ENCODE measurements at regions of chr15 and their contacts with region 1.

Region 1: DNA sequence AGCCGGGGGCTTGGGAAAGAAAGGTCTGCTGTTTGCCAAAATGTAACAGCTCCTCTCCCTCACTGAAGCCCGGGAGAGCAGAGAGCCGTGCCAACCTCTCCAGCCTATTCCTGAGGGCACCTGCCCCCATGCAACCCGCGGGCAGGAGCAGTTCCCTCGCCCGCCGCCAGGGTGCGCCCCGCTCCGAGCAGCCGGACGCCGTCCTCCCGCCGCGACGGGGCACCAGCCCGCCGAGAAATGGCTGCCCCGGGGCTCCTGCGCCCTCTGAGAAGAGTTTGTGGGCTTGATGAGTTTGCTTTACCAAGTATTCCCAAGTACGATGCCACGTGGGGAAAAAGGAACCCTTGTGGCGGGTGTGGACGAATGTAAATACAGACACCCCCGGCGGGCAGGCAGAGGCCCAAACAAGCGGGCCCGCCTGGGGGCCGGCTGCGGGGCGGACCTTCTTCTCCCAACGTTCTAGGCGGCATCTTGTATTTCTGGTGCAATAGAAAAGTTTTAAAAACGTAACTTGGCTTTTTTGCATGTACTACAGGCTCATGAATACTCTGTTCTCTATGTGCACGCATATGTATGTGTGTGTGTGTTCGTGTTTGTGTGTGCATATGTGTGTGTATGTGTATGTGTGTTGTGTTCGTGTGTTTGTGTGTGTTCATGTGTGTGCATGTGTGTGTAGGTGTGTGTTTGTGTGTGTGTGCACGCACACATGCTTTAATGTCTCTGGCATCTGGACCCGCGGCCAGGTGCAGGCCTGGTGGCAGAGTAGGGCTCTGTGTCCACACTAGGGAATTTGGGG is 162.9 kb downstream of the CHSY1 start:
- DNase-seq: peak; percentile 76
- H3K4me3 Mint-ChIP-seq: no peak overlapping the region
- H3K27ac Mint-ChIP-seq: no peak overlapping the region
- H3K4me1 Mint-ChIP-seq: peaks cover 8% of the 10 kb centered on the region
- H3K27me3 Mint-ChIP-seq: peaks cover 1% of the 10 kb centered on the region

Region 2: GRCh38 chr15:100958326-100959065 is 130.5 kb before region 1 on chr15:
- CTCF ChIA-PET with region 1: no interaction called
- POLR2A ChIA-PET with region 1: no interaction called
- DNase-seq: no peak
- H3K4me3 Mint-ChIP-seq: no peak overlapping the region
- H3K27ac Mint-ChIP-seq: no peak overlapping the region
- H3K4me1 Mint-ChIP-seq: no peaks in the 10 kb centered on the region
- H3K27me3 Mint-ChIP-seq: peaks cover 40% of the 10 kb centered on the region

Region 3: DNA sequence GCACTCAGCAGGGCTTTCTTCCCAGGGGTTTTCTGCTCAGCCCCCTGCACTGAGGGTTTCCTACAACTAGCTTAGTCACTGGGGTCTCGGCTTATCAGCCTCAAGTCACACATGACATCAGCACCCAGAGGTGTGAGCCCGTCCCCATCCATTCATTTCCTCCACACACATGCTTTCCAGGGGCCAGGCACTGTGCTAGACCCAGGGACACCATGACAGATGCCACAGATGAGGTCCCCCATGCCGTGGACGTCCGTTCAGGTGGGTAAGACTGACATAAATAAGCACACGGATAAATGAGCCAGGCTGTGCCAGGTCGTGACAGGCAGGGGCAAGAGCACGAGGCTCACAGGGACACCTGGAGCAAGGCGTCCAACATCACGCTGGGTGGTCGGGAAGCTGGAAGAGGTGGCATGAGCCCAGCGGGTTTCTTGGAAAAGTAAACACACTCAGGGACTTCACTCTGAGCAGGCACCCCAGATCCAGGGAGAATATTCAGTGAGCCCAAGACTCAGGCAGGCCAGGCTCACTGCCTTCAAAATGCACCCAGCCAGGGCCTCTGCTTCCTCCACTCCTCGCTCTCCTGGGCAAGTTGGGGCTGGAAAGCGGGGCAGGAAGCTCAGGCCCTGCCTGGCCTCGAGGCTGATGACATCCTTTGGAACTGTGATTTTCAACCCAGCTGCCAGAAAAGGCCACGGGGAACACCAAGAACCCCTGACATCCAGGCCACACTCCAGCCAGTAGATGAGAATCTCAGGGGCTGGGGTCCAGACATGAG is 23.5 kb after region 1 on chr15:
- CTCF ChIA-PET with region 1: interaction called, 11 read pairs
- POLR2A ChIA-PET with region 1: no interaction called
- DNase-seq: no peak
- H3K4me3 Mint-ChIP-seq: no peak overlapping the region
- H3K27ac Mint-ChIP-seq: no peak overlapping the region
- H3K4me1 Mint-ChIP-seq: peaks cover 7% of the 10 kb centered on the region
- H3K27me3 Mint-ChIP-seq: no peaks in the 10 kb centered on the region

Region 4: DNA sequence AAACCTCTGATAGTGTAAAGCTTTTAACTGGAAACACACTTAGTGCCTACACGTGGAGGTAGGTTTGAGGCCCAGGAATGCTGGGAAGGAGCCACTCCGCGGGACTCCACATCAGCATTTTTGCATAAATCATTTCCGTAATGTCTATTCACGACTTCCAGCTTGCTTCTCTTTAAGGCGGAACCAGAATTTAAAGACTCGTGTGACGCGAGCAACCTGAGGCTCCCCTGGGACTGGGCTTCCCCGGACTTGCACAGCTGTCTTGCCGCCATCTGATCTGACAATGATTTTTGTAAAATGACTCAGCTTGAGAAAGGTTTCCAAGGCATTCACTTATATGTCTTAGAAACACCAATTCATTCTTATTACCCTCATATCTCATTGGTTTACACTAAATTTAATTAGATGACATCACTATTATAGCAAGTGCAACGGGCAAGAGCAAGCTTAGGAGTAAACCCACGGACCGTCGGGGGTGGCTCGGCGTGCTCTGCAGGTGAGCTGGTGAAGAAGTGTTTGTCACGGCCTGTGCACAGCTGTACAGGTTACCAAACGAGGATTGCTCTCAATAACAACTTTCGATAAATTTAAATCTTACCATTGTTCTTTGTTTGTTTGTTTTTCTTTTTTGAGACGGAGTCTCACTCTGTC is 67.6 kb after region 1 on chr15:
- CTCF ChIA-PET with region 1: no interaction called
- POLR2A ChIA-PET with region 1: no interaction called
- DNase-seq: no peak
- H3K4me3 Mint-ChIP-seq: no peak overlapping the region
- H3K27ac Mint-ChIP-seq: no peak overlapping the region
- H3K4me1 Mint-ChIP-seq: peaks cover 29% of the 10 kb centered on the region
- H3K27me3 Mint-ChIP-seq: no peaks in the 10 kb centered on the region

Measured in activated CD4-positive, alpha-beta T cell treated with anti-CD3 and anti-CD28 coated beads, Interleukin-2, amount 10 ng/mL, durations not matched to agents 7 days and 5 days (primary cell).